ENCODE measurements at regions of chr17 and their contacts with region 1.

Region 1: DNA sequence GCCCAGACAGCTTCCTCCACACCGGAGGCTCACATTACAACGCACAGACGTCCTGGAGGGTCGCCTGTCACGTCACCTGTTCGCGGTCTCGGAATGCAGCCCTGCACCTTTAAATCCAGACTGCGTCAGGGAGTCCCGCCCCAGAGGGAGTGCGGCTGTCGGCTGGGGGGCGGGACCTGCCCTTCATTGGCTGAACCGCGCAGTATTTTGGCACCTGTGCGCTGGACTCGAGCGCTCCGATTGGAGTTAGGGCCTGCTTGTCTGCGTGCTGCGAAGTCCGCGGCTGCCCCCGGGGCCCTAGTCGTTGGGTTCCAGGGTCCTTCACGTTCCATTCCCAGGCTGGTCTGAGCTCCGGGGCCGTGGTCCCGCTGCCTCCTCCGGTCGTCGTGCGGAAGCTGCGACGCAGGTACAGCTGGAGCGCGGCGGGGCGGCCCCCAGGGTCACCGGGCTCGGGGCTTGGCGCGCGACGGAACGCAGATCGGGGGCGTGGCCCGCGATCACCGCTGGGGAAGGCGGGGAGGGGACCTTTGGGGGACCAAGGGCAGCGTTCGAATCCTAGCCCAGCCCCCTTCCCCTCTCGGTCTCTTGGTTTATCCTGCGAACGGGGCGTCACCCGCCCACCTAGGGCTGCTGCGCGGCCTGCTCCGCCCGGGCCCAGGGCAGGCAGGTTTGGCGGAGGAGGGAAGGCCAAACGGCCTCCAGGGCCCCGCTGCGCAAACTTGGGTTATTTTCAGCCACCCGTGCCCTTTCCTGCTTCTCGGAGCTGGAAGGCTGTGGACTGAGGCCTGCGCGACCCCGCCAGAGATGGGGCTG is at the start of gene MIEF2:
- DNase-seq: peak; percentile 97 to 98
- H3K4me3 ChIP-seq: peak within 1 kb of the TSS; percentile 84 to 94 (median 92)
- H3K27ac ChIP-seq: peak within 1 kb of the TSS; percentile 94 to 98 (median 95)
- H3K4me1 ChIP-seq: peaks cover 41 to 62% (median 59%) of the 10 kb centered on the region in 4 donors
- H3K27me3 ChIP-seq: no peaks in the 10 kb centered on the region
- CTCF ChIP-seq: no peak
- EP300 ChIP-seq: no peak
- POLR2A ChIP-seq: no peak
- total RNA-seq, gene MIEF2: 5.2 to 254 (median 12.5) TPM

Region 2: GRCh38 chr17:18314731-18315561 is 54.4 kb after region 1 on chr17 and contains the starts of genes SMCR8 and TOP3A:
- intact Hi-C with region 1: loop called (anchors 10 kb)
- DNase-seq: peak; percentile 97 to 99
- H3K4me3 ChIP-seq: peak within 1 kb of the TSS; percentile 76 to 98 (median 98)
- H3K27ac ChIP-seq: peak within 1 kb of the TSS; percentile 85 to 96 (median 93)
- H3K4me1 ChIP-seq: peaks cover 57 to 87% (median 73%) of the 10 kb centered on the region in 4 donors
- H3K27me3 ChIP-seq: no peaks in the 10 kb centered on the region
- CTCF ChIP-seq: peak in 2 of 7 experiments; percentile 8 to 36
- EP300 ChIP-seq: peak; percentile 18
- POLR2A ChIP-seq: no peak
- total RNA-seq, gene SMCR8: 5.8 to 17.9 (median 13.0) TPM
- total RNA-seq, gene TOP3A: 21.9 to 311 (median 30.5) TPM